Endothelial cell of umbilical vein (primary cell): ENCODE measurements at regions of chr2 and their contacts with region 1.

Region 1: DNA sequence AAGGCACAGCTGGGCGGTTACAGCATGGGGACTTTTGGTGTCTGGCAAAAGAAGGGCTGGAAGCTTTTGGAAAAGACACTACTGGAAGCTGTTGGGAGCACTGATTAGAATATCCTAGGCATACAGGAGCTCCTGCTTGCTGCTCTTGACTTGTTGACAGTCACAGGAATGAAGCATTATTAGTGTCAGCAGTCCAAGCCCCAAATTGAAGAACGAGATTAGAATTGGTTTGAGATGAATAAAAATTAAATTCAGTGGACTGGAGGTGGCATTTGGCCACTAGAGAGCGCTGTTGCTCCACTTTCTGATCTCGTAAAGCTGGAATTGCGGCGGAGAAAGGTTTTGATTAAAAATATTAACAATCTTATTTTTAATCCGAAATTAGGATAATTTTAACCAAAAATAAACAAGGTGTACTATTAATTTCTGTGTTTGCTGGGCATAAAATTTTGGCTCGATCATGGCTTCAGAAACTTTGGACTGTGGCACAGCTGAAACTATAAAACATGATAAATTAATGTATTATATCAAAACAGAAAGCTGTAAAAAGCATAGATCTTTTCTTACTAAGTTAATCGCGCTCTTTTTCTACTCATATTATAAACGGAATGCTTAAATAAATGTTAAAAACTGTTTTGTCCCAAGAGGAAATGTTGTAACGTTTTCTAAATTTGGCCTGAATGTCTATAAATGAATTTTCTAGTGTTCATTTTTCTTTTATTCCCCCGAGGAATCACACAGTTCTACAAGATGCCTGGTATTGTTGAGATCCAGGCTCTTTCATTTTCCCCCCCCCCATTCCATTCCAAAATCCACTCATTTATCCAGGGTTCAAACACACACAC is 2.4 kb upstream of the HOXD8 start:
- DNase-seq: peak; percentile 68
- H3K4me3 ChIP-seq: peak overlapping the region in 2 of 3 experiments; percentile 48 to 67
- H3K27ac ChIP-seq: no peak overlapping the region
- H3K4me1 ChIP-seq: peaks cover 33% of the 10 kb centered on the region
- H3K27me3 ChIP-seq: peaks cover 5 to 6% of the 10 kb centered on the region in 2 experiments
- CTCF ChIP-seq: peak; percentile 61 to 66
- POLR2A ChIP-seq: no peak

Region 2: DNA sequence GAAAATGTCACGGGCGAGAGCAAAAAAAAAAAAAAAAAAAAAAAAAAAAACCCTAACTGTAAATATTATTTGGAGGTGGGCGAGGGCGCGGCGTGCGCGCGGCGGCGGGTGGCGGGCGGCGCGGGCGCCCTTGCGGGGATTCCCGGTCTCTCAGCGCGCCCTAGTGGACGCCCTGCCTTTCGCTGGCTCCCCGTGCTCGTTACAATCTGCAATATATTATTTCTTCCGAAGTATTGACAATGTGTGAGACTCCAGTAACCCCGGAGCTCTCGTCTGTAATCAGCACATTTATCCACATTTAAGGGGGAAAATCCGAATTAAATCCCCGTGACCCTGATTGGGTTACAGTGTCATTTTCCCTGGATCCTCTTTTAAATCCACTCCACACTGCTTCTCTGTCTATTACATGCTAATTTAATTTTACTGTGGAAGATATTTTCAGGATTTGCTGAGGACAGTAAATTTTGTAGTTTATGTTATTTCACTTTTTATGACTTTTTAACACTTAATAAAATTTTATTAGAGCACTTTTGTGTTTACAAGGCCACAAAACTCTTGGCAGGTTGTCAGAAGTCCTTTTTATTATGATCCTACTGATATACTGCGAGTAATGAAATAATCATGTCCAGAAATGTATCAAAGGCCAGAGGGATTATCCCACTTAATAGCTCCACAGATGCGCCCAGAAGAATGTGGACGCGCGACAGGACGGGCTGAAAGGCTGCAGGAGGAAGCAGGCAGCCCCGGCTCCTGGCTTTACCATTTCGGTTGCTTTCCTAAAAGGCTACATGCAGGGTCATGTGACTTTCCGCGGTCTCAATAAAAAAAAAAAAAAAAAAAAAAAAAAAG is 511.2 kb after region 1 on chr2:
- CTCF ChIA-PET with region 1: interaction called, 82 read pairs
- POLR2A ChIA-PET with region 1: interaction called, 11 read pairs
- dilution Hi-C with region 1: loop called (anchors 25 kb)
- intact Hi-C with region 1: loop called (anchors 1 kb)
- DNase-seq: peak; percentile 74
- H3K4me3 ChIP-seq: peak overlapping the region; percentile 9 to 59 (median 55)
- H3K27ac ChIP-seq: peak overlapping the region; percentile 79
- H3K4me1 ChIP-seq: peaks cover 25% of the 10 kb centered on the region
- H3K27me3 ChIP-seq: no peaks in the 10 kb centered on the region
- CTCF ChIP-seq: peak; percentile 63 to 83
- POLR2A ChIP-seq: no peak

Region 3: GRCh38 chr2:176814306-176815052 is 687.3 kb after region 1 on chr2:
- CTCF ChIA-PET with region 1: interaction called, 95 read pairs
- POLR2A ChIA-PET with region 1: no interaction called
- dilution Hi-C with region 1: no loop called
- intact Hi-C with region 1: no loop called
- DNase-seq: peak; percentile 38
- H3K4me3 ChIP-seq: no peak overlapping the region
- H3K27ac ChIP-seq: no peak overlapping the region
- H3K4me1 ChIP-seq: no peaks in the 10 kb centered on the region
- H3K27me3 ChIP-seq: peaks cover 0 to 9% of the 10 kb centered on the region in 2 experiments
- CTCF ChIP-seq: peak; percentile 16 to 17
- POLR2A ChIP-seq: no peak

Region 4: GRCh38 chr2:177143444-177143843 is 1016.3 kb after region 1 on chr2:
- CTCF ChIA-PET with region 1: interaction called, 78 read pairs
- POLR2A ChIA-PET with region 1: no interaction called
- dilution Hi-C with region 1: no loop called
- intact Hi-C with region 1: loop called (anchors 1 kb)
- DNase-seq: peak; percentile 93
- H3K4me3 ChIP-seq: no peak overlapping the region
- H3K27ac ChIP-seq: no peak overlapping the region
- H3K4me1 ChIP-seq: peaks cover 11% of the 10 kb centered on the region
- H3K27me3 ChIP-seq: peaks cover 9% of the 10 kb centered on the region in 2 experiments
- CTCF ChIP-seq: no peak
- POLR2A ChIP-seq: no peak